Testis (tissue), 5 donors: ENCODE measurements at regions of chr2 and their contacts with region 1.

Region 1: GRCh38 chr2:200585730-200586643 is at the start of gene AOX1:
- DNase-seq: peak; percentile 84
- H3K4me3 ChIP-seq: peak within 1 kb of the TSS; percentile 66 to 68
- H3K27ac ChIP-seq: peak within 1 kb of the TSS; percentile 85 to 87
- H3K4me1 ChIP-seq: peaks cover 18% of the 10 kb centered on the region
- H3K27me3 ChIP-seq: no peaks in the 10 kb centered on the region
- CTCF ChIP-seq: no peak
- POLR2A ChIP-seq: no peak
- total RNA-seq, gene AOX1: 28.7 to 29.4 TPM

Region 2: GRCh38 chr2:200695191-200695590 is 109.2 kb after region 1 on chr2:
- intact Hi-C with region 1: loop called (anchors 10 kb)
- DNase-seq: peak; percentile 20
- H3K4me3 ChIP-seq: no peak overlapping the region
- H3K27ac ChIP-seq: no peak overlapping the region
- H3K4me1 ChIP-seq: no peaks in the 10 kb centered on the region
- H3K27me3 ChIP-seq: no peaks in the 10 kb centered on the region
- CTCF ChIP-seq: no peak
- POLR2A ChIP-seq: no peak